ENCODE measurements at regions of chr20 and their contacts with region 1.

Region 1: GRCh38 chr20:44582311-44583025 is at the start of gene PKIG:
- DNase-seq: peak; percentile 48
- H3K4me3 ChIP-seq: peak within 1 kb of the TSS; percentile 72
- H3K27ac ChIP-seq: peak within 1 kb of the TSS; percentile 98
- H3K4me1 ChIP-seq: peaks cover 80% of the 10 kb centered on the region
- CTCF ChIP-seq: no peak
- total RNA-seq, gene PKIG: 37.2 and 46.9 TPM in 2 replicates

Region 2: GRCh38 chr20:44598423-44599305 is 16.2 kb after region 1 on chr20:
- CTCF ChIA-PET with region 1: interaction called, 4 read pairs
- POLR2A ChIA-PET with region 1: interaction called, 12 read pairs
- intact Hi-C with region 1: no loop called
- DNase-seq: peak; percentile 40
- H3K4me3 ChIP-seq: peak overlapping the region; percentile 4
- H3K27ac ChIP-seq: peak overlapping the region; percentile 31
- H3K4me1 ChIP-seq: peaks cover 67% of the 10 kb centered on the region
- CTCF ChIP-seq: peak; percentile 40; the same call in 1 of the 2 replicates

Region 3: DNA sequence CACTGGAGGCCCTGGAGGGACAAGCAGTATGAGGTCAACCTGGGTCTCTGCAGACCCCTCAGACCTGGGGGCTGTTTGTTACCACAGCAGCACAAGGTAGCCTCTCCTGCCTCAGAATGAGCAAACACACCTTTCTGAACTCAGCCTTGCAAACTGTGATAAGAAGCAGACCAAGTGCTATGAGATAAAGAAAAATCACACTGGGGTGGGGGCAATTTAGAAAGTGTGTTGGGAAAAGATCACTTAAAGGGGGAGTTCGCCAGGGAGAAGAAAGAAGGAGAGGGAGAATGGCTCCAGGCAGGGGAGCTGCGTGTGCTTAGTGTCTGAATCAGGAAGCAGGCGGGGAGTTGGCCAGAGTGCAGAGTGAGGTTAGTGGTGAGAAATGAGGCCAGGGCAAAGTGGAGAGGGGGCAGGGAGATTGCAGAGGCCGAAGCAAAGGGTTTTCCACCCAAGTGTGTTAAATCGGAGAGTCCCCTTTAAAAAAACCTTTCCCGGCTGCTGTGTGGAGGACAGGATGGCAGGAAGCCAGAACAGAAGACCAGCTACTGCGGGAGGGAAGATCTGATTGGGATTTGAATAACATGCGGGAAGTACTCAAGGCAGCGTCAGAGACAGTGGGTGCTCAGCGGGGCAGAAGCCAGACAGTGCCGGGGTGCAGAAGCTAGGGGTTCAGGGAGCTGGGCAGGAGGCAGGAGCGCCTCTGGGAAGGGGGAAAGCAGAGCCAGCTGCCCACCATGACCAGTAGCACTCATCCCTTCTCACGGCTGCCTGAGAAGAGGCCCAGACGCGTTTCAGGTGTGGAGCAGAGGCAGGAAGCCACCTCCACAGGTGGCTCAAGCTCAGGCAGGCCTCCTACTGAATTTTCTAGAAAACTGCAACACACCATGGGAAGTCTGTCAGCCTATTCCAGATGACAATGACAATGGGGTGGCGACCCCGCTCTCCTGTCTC is 60.0 kb after region 1 on chr20:
- CTCF ChIA-PET with region 1: interaction called, 3 read pairs
- POLR2A ChIA-PET with region 1: interaction called, 33 read pairs
- intact Hi-C with region 1: loop called (anchors 1 kb)
- DNase-seq: peak; percentile 65
- H3K4me3 ChIP-seq: peak overlapping the region; percentile 38
- H3K27ac ChIP-seq: peak overlapping the region; percentile 99
- H3K4me1 ChIP-seq: peaks cover 67% of the 10 kb centered on the region
- CTCF ChIP-seq: peak; percentile 68

Region 4: GRCh38 chr20:44656448-44656847 is 74.0 kb after region 1 on chr20:
- CTCF ChIA-PET with region 1: no interaction called
- POLR2A ChIA-PET with region 1: no interaction called
- intact Hi-C with region 1: no loop called
- DNase-seq: no peak
- H3K4me3 ChIP-seq: no peak overlapping the region
- H3K27ac ChIP-seq: no peak overlapping the region
- H3K4me1 ChIP-seq: peaks cover 16% of the 10 kb centered on the region
- CTCF ChIP-seq: no peak